ENCODE measurements at regions of chr7 and their contacts with region 1.

Region 1: GRCh38 chr7:156156734-156157610 is 344.7 kb upstream of the SHH start:
- DNase-seq: peak; percentile 70
- ATAC-seq: peak; percentile 90
- H3K4me3 ChIP-seq: no peak overlapping the region
- H3K27ac ChIP-seq: no peak overlapping the region
- H3K4me1 ChIP-seq: peaks cover 11% of the 10 kb centered on the region; the same call in 1 of the 2 replicates
- H3K27me3 ChIP-seq: no peaks in the 10 kb centered on the region
- CTCF ChIP-seq: peak; percentile 68

Region 2: GRCh38 chr7:155804897-155805825 is 351.8 kb before region 1 on chr7:
- CTCF ChIA-PET with region 1: no interaction called
- POLR2A ChIA-PET with region 1: no interaction called
- intact Hi-C with region 1: loop called (anchors 2 kb)
- DNase-seq: peak; percentile 76
- ATAC-seq: peak; percentile 72
- H3K4me3 ChIP-seq: peak overlapping the region; percentile 68
- H3K27ac ChIP-seq: no peak overlapping the region
- H3K4me1 ChIP-seq: peaks cover 13% of the 10 kb centered on the region; the same call in 1 of the 2 replicates
- H3K27me3 ChIP-seq: peaks cover 20% of the 10 kb centered on the region
- CTCF ChIP-seq: peak; percentile 56

Region 3: GRCh38 chr7:155815332-155816191 is 341.4 kb before region 1 on chr7:
- CTCF ChIA-PET with region 1: interaction called, 8 read pairs
- POLR2A ChIA-PET with region 1: no interaction called
- intact Hi-C with region 1: loop called (anchors 1 kb)
- DNase-seq: peak; percentile 76
- ATAC-seq: peak; percentile 73
- H3K4me3 ChIP-seq: no peak overlapping the region
- H3K27ac ChIP-seq: no peak overlapping the region
- H3K4me1 ChIP-seq: peaks cover 21% of the 10 kb centered on the region
- H3K27me3 ChIP-seq: peaks cover 28% of the 10 kb centered on the region
- CTCF ChIP-seq: peak; percentile 74

Region 4: GRCh38 chr7:155896531-155897263 is 260.3 kb before region 1 on chr7:
- CTCF ChIA-PET with region 1: interaction called, 4 read pairs
- POLR2A ChIA-PET with region 1: no interaction called
- intact Hi-C with region 1: loop called (anchors 10 kb)
- DNase-seq: peak; percentile 88
- ATAC-seq: peak; percentile 95
- H3K4me3 ChIP-seq: 0 out of 2 replicates have a peak overlapping the region, but pooled peaks have one; percentile 12
- H3K27ac ChIP-seq: peak overlapping the region; percentile 19; the same call in 1 of the 2 replicates
- H3K4me1 ChIP-seq: peaks cover 23% of the 10 kb centered on the region
- H3K27me3 ChIP-seq: no peaks in the 10 kb centered on the region
- CTCF ChIP-seq: no peak

Region 5: DNA sequence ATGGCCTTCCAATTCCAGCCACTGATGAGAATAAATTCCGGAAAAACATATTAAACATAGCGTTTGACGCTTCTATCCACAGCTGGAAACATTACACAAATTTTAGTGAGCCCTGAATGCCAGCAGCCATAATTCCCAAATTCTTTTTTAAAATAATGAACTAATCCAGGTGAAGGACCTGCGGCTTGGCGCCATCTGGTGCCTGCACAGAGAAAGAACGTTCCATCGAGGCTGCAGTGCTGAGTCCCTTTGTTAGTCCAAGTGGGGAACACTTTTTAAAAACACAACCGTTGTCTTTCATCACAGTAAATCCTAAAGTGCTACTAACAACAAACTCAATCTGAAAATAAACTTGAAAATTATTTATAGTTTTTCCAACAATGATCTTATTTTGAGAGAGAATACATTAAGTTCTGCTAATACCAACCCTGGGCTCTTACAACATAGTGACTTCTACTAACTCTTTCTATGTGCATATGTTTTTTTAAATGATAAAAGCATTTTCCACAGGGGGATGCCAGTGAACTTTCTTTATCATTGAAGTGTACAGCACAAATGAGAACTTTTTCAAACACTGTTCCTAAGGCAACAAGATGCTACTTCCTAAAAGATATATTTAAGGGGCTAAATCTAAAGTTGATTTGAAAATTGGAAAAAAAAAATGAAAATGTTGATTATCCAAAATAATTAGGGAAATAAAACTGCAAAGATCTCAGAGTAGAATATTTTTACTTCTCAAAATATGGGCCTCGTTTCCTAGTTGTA is 316.7 kb after region 1 on chr7:
- CTCF ChIA-PET with region 1: no interaction called
- POLR2A ChIA-PET with region 1: no interaction called
- intact Hi-C with region 1: loop called (anchors 5 kb)
- DNase-seq: peak; percentile 52
- ATAC-seq: peak; percentile 65
- H3K4me3 ChIP-seq: no peak overlapping the region
- H3K27ac ChIP-seq: no peak overlapping the region
- H3K4me1 ChIP-seq: peaks cover 12% of the 10 kb centered on the region
- H3K27me3 ChIP-seq: no peaks in the 10 kb centered on the region
- CTCF ChIP-seq: peak; percentile 88